Mammary epithelial cell (primary cell): ENCODE measurements at regions of chr17 and their contacts with region 1.

Region 1: GRCh38 chr17:79839363-79840268 is at the start of gene CBX4:
- DNase-seq: peak; percentile 92
- H3K4me3 ChIP-seq: peak within 1 kb of the TSS; percentile 71 to 86 (median 85)
- H3K27ac ChIP-seq: peak within 1 kb of the TSS; percentile 68
- H3K4me1 ChIP-seq: peaks cover 47% of the 10 kb centered on the region
- H3K27me3 ChIP-seq: peaks cover 35% of the 10 kb centered on the region
- CTCF ChIP-seq: peak; percentile 63 to 84
- total RNA-seq, gene CBX4: 28.5 to 34.7 TPM

Region 2: DNA sequence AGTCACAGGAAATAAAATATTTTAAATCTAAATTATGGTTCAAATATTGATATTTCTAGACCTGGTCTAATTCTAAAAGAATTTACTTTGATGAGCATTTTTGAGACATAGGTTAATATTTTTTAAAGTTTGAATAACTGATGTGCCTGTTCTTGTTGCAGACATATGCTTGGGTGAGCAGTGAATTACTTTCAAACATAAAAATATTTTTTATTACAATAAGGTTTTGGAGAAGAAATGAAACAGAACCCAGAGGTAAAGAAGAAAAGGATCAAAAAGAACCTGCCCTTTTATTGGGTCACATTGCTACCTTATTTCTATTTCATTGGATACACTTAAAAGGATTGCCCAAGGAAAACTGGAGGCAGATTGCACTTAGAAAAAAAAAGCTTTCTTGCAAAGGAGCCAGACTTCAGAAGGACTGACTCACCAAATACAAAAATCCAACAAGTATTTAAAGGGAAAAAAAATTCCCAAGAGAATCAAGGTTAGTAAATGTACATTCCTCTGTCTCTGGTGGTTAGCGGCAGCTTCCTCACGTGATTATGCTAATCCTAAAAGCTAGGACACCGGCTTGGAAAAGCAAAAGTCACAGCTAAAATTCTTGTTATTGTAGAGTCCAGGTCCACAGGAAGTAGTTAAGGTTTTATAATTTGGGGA is 90.3 kb before region 1 on chr17:
- CTCF ChIA-PET with region 1: no interaction called
- dilution Hi-C with region 1: no loop called
- in situ Hi-C with region 1: no loop called
- intact Hi-C with region 1: loop called (anchors 1 kb)
- DNase-seq: peak; percentile 27
- H3K4me3 ChIP-seq: no peak overlapping the region
- H3K27ac ChIP-seq: no peak overlapping the region
- H3K4me1 ChIP-seq: no peaks in the 10 kb centered on the region
- H3K27me3 ChIP-seq: peaks cover 25% of the 10 kb centered on the region
- CTCF ChIP-seq: no peak

Region 3: GRCh38 chr17:79810130-79811010 is 29.2 kb before region 1 on chr17:
- CTCF ChIA-PET with region 1: interaction called, 9 read pairs
- dilution Hi-C with region 1: no loop called
- in situ Hi-C with region 1: no loop called
- intact Hi-C with region 1: loop called (anchors 1 kb)
- DNase-seq: peak; percentile 80
- H3K4me3 ChIP-seq: peak overlapping the region in 2 of 3 experiments; percentile 9 to 42
- H3K27ac ChIP-seq: no peak overlapping the region
- H3K4me1 ChIP-seq: peaks cover 40% of the 10 kb centered on the region
- H3K27me3 ChIP-seq: peaks cover 25% of the 10 kb centered on the region
- CTCF ChIP-seq: no peak

Region 4: GRCh38 chr17:79892459-79892858 is 52.8 kb after region 1 on chr17:
- CTCF ChIA-PET with region 1: no interaction called
- dilution Hi-C with region 1: loop called (anchors 5 kb)
- in situ Hi-C with region 1: no loop called
- intact Hi-C with region 1: no loop called
- DNase-seq: peak; percentile 20
- H3K4me3 ChIP-seq: no peak overlapping the region
- H3K27ac ChIP-seq: no peak overlapping the region
- H3K4me1 ChIP-seq: no peaks in the 10 kb centered on the region
- H3K27me3 ChIP-seq: no peaks in the 10 kb centered on the region
- CTCF ChIP-seq: no peak

Region 5: GRCh38 chr17:79970576-79971068 is 131.0 kb after region 1 on chr17:
- CTCF ChIA-PET with region 1: interaction called, 8 read pairs
- dilution Hi-C with region 1: no loop called
- in situ Hi-C with region 1: no loop called
- intact Hi-C with region 1: loop called (anchors 5 kb)
- DNase-seq: peak; percentile 48
- H3K4me3 ChIP-seq: no peak overlapping the region
- H3K27ac ChIP-seq: peak overlapping the region; percentile 72
- H3K4me1 ChIP-seq: peaks cover 6% of the 10 kb centered on the region
- H3K27me3 ChIP-seq: no peaks in the 10 kb centered on the region
- CTCF ChIP-seq: peak; percentile 34 to 41